CD8-positive, alpha-beta T cell (primary cell): ENCODE measurements at regions of chr12 and their contacts with region 1.

Region 1: DNA sequence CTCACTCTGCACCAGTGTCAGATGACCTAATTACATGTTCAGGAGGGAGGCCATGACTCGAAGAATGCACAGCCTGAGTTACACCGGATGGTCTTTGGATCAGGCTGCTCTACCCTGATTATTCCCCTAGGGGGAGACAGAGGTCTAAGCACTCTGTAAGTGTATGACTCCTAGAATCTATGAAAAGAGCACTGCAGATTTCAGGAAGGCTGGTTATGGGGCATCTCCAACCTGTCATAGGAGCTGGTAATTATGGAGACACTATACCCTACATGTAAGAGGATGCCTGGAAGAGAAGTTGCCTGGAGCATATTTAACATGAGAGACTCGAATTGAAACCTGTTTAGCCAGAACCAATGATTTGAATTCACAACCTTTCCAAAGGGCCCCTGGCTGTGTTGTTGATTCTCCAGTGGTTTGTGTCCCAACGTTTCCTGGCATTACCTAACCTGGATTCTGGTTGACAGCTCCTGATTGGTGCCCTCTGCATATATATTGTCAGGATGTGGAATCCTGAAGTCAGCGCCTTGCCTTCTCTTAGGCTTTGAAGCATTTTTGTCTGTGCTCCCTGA is at the start of gene MUCL1:
- DNase-seq: peak; percentile 52 to 83 (median 72)
- ATAC-seq: peak; percentile 100
- H3K4me3 ChIP-seq: no peak within 1 kb of the TSS
- H3K4me3 Mint-ChIP-seq: no peak within 1 kb of the TSS
- H3K27ac ChIP-seq: no peak within 1 kb of the TSS
- H3K27ac Mint-ChIP-seq: no peak within 1 kb of the TSS
- H3K4me1 ChIP-seq: no peaks in the 10 kb centered on the region
- H3K4me1 Mint-ChIP-seq: peaks cover 4% of the 10 kb centered on the region
- H3K27me3 ChIP-seq: no peaks in the 10 kb centered on the region
- H3K27me3 Mint-ChIP-seq: peaks cover 2% of the 10 kb centered on the region
- CTCF ChIP-seq: peak; percentile 93
- total RNA-seq, gene MUCL1: not detected

Region 2: GRCh38 chr12:54795644-54796043 is 58.4 kb before region 1 on chr12:
- CTCF ChIA-PET with region 1: no interaction called
- POLR2A ChIA-PET with region 1: no interaction called
- intact Hi-C with region 1: no loop called
- DNase-seq: no peak
- ATAC-seq: no peak
- H3K4me3 ChIP-seq: no peak overlapping the region
- H3K4me3 Mint-ChIP-seq: no peak overlapping the region
- H3K27ac ChIP-seq: no peak overlapping the region
- H3K27ac Mint-ChIP-seq: no peak overlapping the region
- H3K4me1 ChIP-seq: no peaks in the 10 kb centered on the region
- H3K4me1 Mint-ChIP-seq: no peaks in the 10 kb centered on the region
- H3K27me3 ChIP-seq: no peaks in the 10 kb centered on the region
- H3K27me3 Mint-ChIP-seq: no peaks in the 10 kb centered on the region
- CTCF ChIP-seq: no peak

Region 3: GRCh38 chr12:54935235-54935951 is 81.3 kb after region 1 on chr12:
- CTCF ChIA-PET with region 1: interaction called, 6 read pairs
- POLR2A ChIA-PET with region 1: no interaction called
- intact Hi-C with region 1: loop called (anchors 1 to 5 kb)
- DNase-seq: peak in 7 of 9 experiments; percentile 12 to 69 (median 36)
- ATAC-seq: peak; percentile 91
- H3K4me3 ChIP-seq: no peak overlapping the region
- H3K4me3 Mint-ChIP-seq: peak overlapping the region; percentile 55
- H3K27ac ChIP-seq: peak overlapping the region in 1 of 2 experiments; percentile 66
- H3K27ac Mint-ChIP-seq: peak overlapping the region; percentile 93
- H3K4me1 ChIP-seq: peaks cover 37% of the 10 kb centered on the region
- H3K4me1 Mint-ChIP-seq: peaks cover 47% of the 10 kb centered on the region
- H3K27me3 ChIP-seq: no peaks in the 10 kb centered on the region
- H3K27me3 Mint-ChIP-seq: no peaks in the 10 kb centered on the region
- CTCF ChIP-seq: no peak

Region 4: GRCh38 chr12:54967461-54967860 is 113.4 kb after region 1 on chr12:
- CTCF ChIA-PET with region 1: interaction called, 15 read pairs
- POLR2A ChIA-PET with region 1: no interaction called
- intact Hi-C with region 1: no loop called
- DNase-seq: peak in 5 of 9 experiments; percentile 40 to 65 (median 50)
- ATAC-seq: peak; percentile 61
- H3K4me3 ChIP-seq: peak overlapping the region in 1 of 2 experiments; percentile 6
- H3K4me3 Mint-ChIP-seq: peak overlapping the region; percentile 70
- H3K27ac ChIP-seq: peak overlapping the region in 1 of 2 experiments; percentile 34
- H3K27ac Mint-ChIP-seq: peak overlapping the region; percentile 91
- H3K4me1 ChIP-seq: peaks cover 57% of the 10 kb centered on the region
- H3K4me1 Mint-ChIP-seq: peaks cover 80% of the 10 kb centered on the region
- H3K27me3 ChIP-seq: no peaks in the 10 kb centered on the region
- H3K27me3 Mint-ChIP-seq: no peaks in the 10 kb centered on the region
- CTCF ChIP-seq: no peak